Breast epithelium (tissue), 4 donors: ENCODE measurements at regions of chr17 and their contacts with region 1.

Region 1: DNA sequence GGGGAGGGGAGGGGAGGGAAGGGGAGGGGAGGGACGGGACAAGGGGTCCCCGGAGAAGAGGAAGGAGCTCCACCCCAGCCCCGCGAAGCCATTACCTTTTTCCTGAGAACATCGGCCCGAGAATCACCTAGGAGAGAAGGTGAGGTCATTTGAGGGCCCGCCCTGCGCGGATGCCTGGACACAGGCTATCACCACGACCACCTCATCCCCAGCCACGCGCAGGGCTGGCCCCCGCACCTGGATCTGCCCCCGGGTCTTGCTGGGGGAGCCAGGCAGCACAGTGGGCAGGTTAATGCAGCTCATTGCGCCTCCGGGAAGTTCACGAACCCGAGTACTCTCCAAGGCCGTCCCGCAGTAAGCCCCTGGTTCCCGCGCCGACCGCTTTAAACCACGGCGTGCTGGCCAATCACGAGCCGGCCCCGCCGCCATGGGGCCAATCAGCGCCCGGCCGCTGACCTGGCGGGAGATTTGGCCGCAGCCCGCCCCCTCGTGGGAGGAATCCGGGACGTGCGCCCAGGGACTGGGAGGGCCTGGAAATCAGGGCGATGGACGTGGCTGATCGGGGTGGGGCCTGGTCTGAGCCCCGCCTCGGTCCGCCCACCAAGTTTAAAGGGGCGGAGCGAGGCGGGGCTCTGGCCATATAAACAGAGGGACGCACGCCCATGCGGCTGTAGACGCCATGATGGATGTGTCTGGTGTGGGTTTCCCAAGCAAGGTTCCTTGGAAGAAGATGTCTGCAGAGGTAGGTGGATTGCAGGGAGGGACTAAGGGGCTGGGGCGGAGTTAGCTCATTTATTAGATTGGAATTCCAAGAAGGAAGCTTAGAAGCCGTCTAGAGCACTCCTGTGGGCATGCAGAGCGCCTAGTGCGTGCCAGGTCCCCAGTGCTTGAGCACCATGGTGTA is at the starts of genes AFMID and TK1:
- DNase-seq: peak; percentile 97 to 99
- H3K4me3 ChIP-seq: peak within 1 kb of the TSS; percentile 46 to 71 (median 49)
- H3K27ac ChIP-seq: peak within 1 kb of the TSS; percentile 76 to 81
- H3K4me1 ChIP-seq: peaks cover 3 to 10% of the 10 kb centered on the region in 2 donors
- H3K27me3 ChIP-seq: no peaks in the 10 kb centered on the region
- CTCF ChIP-seq: peak; percentile 74 to 92 (median 83)
- POLR2A ChIP-seq: peak; percentile 32
- total RNA-seq, gene AFMID: 12.3 to 66.2 (median 65.2) TPM
- total RNA-seq, gene TK1: 2.6 to 5.6 (median 3.7) TPM

Region 2: GRCh38 chr17:77155125-77155524 is 1031.8 kb before region 1 on chr17:
- intact Hi-C with region 1: loop called (anchors 5 kb)
- DNase-seq: no peak
- H3K4me3 ChIP-seq: no peak overlapping the region
- H3K27ac ChIP-seq: no peak overlapping the region
- H3K4me1 ChIP-seq: no peaks in the 10 kb centered on the region
- H3K27me3 ChIP-seq: no peaks in the 10 kb centered on the region
- CTCF ChIP-seq: no peak
- POLR2A ChIP-seq: no peak

Region 3: DNA sequence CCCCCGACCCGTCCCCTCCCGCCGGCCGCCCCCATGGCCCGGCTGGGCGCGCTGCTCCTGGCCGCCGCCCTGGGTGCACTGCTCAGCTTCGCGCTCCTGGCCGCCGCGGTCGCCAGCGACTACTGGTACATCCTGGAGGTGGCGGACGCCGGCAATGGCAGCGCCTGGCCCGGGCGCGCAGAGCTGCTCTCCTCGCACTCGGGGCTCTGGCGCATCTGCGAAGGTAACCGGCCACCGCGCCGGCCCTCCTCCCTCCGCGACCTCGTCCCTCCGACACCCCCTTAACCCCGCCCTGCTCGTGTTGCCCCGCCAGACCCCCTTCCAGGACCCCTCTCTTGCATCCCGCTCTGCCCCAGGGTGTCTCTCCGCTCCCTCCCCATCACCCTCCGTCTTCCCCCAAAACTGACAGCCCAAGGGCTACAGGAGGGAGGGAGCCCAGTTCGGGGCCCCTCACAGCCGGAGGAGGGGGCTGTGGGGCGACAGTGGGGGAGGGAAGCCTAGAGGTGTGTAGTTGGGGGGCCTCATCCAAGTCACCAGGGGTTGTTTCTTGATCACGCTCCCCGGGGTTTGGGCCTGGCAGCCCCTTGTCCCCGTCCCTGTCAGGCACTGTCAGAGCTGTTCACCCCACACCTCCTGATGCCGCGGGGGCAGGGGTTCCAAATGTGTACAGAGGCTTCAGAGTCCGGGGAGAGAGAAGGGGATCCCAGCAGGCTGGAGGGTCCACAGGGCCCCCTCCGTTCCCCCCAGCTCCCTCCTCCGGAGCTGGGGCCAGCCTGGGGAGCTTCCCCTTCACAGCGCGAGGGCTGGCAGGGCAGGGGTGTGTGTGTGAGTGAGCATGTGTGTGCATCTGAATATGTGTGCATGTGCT is 45.3 kb after region 1 on chr17:
- intact Hi-C with region 1: no loop called
- DNase-seq: no peak
- H3K4me3 ChIP-seq: peak overlapping the region in 1 of 3 donors; percentile 54
- H3K27ac ChIP-seq: no peak overlapping the region
- H3K4me1 ChIP-seq: no peaks in the 10 kb centered on the region
- H3K27me3 ChIP-seq: peaks cover 5 to 24% of the 10 kb centered on the region in 2 donors
- CTCF ChIP-seq: no peak
- POLR2A ChIP-seq: no peak